PC-3 (cell line): ENCODE measurements at regions of chr4 and their contacts with region 1.

Region 1: DNA sequence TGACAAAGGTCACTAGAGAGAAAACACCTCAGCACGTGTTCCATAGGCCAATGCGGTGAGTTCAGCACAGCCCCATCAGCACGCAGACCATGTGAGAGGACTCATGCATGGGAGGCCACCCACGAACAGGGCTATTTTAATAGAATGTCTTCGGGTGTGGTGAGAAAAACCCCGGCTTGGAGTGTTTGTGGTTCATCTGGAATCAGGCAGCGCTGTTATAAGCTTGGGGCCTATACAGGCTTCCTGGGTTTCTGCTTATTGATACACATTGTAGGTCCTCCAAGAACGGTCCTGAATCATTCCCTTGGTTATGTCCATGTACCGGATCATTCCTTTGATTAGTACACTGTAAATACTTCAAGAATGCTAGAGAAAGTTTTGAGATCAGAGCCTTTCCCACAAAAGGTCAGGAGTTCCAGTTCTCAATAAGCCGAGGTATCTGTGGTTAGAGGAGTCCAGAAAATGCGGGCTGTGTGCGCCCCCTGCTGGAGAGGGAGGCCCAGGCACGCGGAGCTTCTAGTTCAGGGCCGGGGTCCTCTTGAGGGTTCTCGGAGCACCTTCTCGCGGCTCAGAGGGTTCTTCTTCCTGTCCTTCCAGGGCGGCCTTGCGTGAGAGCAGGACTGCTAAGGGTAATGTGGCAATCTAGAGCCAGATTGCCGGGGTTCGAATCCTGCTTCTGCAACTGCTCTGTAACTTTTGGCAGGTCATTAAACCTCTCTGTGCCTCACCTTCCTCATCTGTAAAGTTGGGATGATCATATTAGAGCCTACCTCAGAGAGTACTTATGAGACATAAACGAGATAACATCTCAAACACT is 51.8 kb downstream of the TLR10 start:
- DNase-seq: peak; percentile 73
- ATAC-seq: peak; percentile 67
- H3K4me3 ChIP-seq: no peak overlapping the region
- H3K27ac ChIP-seq: no peak overlapping the region
- H3K4me1 ChIP-seq: peaks cover 18% of the 10 kb centered on the region
- H3K27me3 ChIP-seq: no peaks in the 10 kb centered on the region
- CTCF ChIP-seq: peak; percentile 94

Region 2: GRCh38 chr4:38062088-38062893 is 668.7 kb before region 1 on chr4:
- CTCF ChIA-PET with region 1: no interaction called
- POLR2A ChIA-PET with region 1: no interaction called
- intact Hi-C with region 1: loop called (anchors 2 kb)
- DNase-seq: peak; percentile 73
- ATAC-seq: peak; percentile 67
- H3K4me3 ChIP-seq: no peak overlapping the region
- H3K27ac ChIP-seq: no peak overlapping the region
- H3K4me1 ChIP-seq: no peaks in the 10 kb centered on the region
- H3K27me3 ChIP-seq: no peaks in the 10 kb centered on the region
- CTCF ChIP-seq: peak; percentile 79

Region 3: DNA sequence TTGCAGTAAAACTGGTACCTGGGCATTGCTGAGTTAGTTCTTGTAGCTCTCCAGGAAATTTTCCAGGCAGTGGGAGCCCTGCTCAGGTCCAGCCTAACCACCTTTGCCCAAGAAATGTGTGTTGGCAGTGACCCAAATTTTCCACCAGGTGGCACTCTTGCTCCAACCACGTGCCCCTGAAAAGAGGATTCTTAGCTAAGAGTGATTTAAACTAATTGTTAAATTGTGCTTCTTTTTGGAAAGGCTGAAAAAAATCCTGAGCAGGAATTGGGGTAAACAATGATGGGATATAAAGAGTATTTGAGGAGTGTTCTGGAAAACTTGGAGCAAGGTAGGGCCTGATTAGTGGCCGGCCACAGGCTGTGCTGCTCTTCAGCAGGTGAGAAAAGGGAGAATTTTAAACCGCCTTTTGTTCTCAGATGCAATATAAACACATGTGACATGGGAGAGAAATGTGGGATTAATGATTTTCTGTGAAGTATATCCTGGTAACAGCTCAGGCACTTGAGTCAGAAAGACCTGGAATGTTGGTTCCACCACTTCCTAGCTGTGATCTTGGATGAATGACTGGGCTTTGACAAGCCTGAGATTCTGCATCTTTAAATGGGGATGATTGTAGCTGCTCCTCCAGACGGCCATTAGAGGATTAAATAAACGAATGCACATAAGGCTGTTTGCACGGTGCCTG is 551.2 kb before region 1 on chr4:
- CTCF ChIA-PET with region 1: interaction called, 4 read pairs
- POLR2A ChIA-PET with region 1: no interaction called
- intact Hi-C with region 1: loop called (anchors 1 kb)
- DNase-seq: peak; percentile 78
- ATAC-seq: peak; percentile 86
- H3K4me3 ChIP-seq: no peak overlapping the region
- H3K27ac ChIP-seq: peak overlapping the region; percentile 72
- H3K4me1 ChIP-seq: peaks cover 15% of the 10 kb centered on the region
- H3K27me3 ChIP-seq: no peaks in the 10 kb centered on the region
- CTCF ChIP-seq: peak; percentile 90

Region 4: DNA sequence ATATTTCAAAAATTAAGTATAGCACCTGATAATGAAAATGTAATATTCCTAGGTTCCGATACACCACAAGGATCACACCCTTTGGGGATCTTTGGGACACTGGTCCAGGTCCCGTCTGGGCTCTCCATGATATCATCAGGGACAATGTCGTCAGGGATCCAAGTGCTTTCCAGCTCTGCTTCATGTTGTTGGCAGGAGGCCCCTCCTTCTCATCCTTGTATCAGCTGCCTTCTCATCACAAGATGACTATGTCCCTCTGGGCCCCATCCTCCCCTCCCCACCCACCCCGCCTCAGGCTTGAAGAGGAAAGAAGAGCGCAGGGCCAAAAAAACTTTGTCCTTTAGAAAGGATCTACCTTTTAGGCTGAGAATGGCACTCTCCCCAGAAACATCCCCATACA is 195.3 kb before region 1 on chr4:
- CTCF ChIA-PET with region 1: no interaction called
- POLR2A ChIA-PET with region 1: no interaction called
- intact Hi-C with region 1: no loop called
- DNase-seq: no peak
- ATAC-seq: no peak
- H3K4me3 ChIP-seq: no peak overlapping the region
- H3K27ac ChIP-seq: no peak overlapping the region
- H3K4me1 ChIP-seq: no peaks in the 10 kb centered on the region
- H3K27me3 ChIP-seq: no peaks in the 10 kb centered on the region
- CTCF ChIP-seq: no peak

Region 5: DNA sequence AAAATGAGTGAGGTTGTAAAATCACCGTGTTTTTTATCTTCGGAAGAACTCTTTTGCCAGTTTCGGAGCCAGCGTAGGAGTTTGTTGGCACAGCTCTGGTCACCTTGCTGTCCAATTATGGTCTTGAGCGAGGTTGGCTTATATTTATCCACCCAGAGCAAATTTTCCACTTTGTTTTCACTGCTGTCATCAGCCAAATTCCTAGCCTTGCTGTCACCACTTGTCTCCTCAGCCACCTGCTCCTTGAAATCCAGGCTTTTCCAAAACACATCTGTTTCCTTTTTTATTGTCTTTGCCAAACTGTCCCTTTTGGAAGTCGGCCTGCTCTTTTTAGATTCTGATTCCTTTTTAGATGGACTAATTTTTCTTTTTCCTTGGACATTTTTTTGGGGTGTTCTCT is 577.6 kb after region 1 on chr4:
- CTCF ChIA-PET with region 1: no interaction called
- POLR2A ChIA-PET with region 1: no interaction called
- intact Hi-C with region 1: no loop called
- DNase-seq: no peak
- ATAC-seq: no peak
- H3K4me3 ChIP-seq: no peak overlapping the region
- H3K27ac ChIP-seq: no peak overlapping the region
- H3K4me1 ChIP-seq: no peaks in the 10 kb centered on the region
- H3K27me3 ChIP-seq: no peaks in the 10 kb centered on the region
- CTCF ChIP-seq: no peak